Spleen (tissue), 13 donors: ENCODE measurements at regions of chr11 and their contacts with region 1.

Region 1: GRCh38 chr11:33027846-33028536 is 11.4 kb upstream of the TCP11L1 start:
- DNase-seq: no peak
- H3K4me3 ChIP-seq: no peak overlapping the region
- H3K27ac ChIP-seq: no peak overlapping the region
- H3K4me1 ChIP-seq: no peaks in the 10 kb centered on the region
- H3K27me3 ChIP-seq: no peaks in the 10 kb centered on the region
- CTCF ChIP-seq: no peak
- POLR2A ChIP-seq: no peak

Region 2: DNA sequence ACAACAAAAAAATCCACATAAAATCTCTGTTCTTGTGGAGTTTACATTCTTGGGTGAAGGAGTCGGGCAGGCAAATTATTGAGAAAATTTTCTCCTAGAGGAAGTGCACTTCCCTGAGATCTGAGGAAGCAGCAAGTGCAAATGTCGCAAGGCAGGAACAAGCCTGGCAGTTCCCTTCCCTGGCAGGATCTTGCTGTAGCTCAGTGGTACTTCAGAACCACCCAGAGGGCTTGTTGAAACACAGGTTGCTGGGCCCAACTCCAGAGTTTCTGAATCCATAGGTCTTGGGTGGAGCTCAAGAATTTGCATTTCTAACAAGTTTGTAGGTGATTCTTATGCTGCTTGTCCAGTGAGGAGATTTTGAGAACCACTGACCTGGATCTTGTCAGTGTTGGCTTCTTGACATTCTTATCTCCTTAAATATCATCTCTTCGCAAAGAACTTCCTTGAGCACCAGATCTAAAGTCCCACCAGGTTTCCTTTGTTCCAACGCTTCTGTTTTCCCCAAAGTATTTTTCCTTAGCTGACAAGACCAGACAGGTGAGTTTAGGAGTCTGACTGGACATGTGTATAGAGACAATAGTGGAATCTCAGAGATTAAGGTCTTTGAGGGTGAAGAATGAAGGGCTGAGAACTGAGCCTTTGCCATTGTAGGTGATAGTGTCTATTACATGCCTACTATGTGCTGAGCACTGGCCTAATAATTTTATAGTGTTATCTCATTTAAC is 125.7 kb before region 1 on chr11:
- intact Hi-C with region 1: loop called (anchors 10 kb)
- DNase-seq: no peak
- H3K4me3 ChIP-seq: no peak overlapping the region
- H3K27ac ChIP-seq: no peak overlapping the region
- H3K4me1 ChIP-seq: peaks cover 0 to 61% (median 31%) of the 10 kb centered on the region in 6 donors
- H3K27me3 ChIP-seq: no peaks in the 10 kb centered on the region
- CTCF ChIP-seq: no peak
- POLR2A ChIP-seq: no peak

Region 3: GRCh38 chr11:32960553-32961164 is 67.3 kb before region 1 on chr11:
- intact Hi-C with region 1: no loop called
- DNase-seq: no peak
- H3K4me3 ChIP-seq: no peak overlapping the region
- H3K27ac ChIP-seq: no peak overlapping the region
- H3K4me1 ChIP-seq: no peaks in the 10 kb centered on the region
- H3K27me3 ChIP-seq: no peaks in the 10 kb centered on the region
- CTCF ChIP-seq: peak; percentile 40 to 78 (median 67)
- POLR2A ChIP-seq: no peak

Region 4: DNA sequence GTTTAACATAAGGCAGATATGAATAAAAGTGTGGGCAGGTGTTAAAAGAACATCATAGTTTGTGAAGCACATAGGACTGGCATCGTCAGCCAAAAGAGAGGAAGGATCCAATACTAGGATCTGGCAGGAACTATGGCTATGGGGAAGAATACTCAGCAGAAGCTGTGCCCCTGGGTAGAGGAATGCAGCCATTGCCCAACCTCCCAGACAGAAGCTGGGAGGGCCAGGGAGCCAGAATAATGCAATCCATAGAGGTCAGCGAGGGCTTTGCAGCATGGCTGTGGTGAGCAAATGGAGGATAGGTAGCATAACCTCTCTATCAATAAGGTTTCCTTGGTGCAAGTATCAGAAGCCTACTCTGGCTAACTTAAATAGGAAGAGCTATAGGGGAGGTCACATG is 145.0 kb after region 1 on chr11:
- intact Hi-C with region 1: no loop called
- DNase-seq: no peak
- H3K4me3 ChIP-seq: no peak overlapping the region
- H3K27ac ChIP-seq: no peak overlapping the region
- H3K4me1 ChIP-seq: peaks cover 0 to 7% (median 0%) of the 10 kb centered on the region in 6 donors
- H3K27me3 ChIP-seq: no peaks in the 10 kb centered on the region
- CTCF ChIP-seq: no peak
- POLR2A ChIP-seq: no peak